ENCODE measurements at regions of chr3 and their contacts with region 1.

Region 1: DNA sequence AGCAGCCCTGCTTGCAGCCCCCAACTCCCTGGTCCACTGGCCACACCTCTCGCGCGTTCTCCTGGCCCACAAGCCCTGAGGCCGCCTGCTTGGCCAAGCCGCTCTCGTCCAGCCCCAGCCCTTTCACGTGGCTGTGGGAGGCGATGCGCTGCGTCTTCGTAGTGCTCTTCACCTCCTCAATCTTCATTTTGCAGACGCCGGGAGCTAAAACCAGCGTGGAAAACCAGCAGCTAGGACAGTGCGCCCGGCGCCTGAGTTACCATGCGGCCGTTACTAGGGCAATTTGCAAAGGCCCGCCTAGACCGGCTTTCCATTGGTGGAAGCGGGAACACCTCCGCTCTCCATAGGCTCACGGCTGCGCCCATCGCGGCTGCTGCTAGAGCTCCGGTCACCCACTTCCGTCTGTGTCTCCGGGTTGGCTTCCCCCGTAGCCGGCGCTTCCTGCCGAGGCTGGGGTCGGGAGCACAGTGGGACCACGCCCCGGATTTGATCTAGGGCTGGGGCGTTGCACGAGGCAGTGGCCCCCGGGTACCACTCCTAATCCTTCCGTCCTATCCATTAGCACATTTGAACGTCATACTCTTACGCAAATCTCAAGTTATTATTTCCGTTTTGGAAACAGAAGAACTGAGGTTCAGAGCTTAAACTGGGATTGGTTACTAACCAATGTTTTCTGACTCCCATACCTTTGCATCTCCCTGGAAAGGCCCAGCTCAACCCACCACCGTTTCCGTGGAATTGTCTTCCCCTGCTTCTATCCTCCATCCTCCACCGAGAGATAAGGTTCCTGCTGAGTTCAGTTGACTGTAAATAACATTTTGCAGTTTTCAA is at the start of gene RUVBL1:
- DNase-seq: peak; percentile 89 to 99
- H3K4me3 ChIP-seq: peak within 1 kb of the TSS; percentile 82 to 87
- H3K27ac ChIP-seq: peak within 1 kb of the TSS; percentile 66 to 75
- H3K4me1 ChIP-seq: peaks cover 0 to 8% of the 10 kb centered on the region in 2 donors
- H3K27me3 ChIP-seq: no peaks in the 10 kb centered on the region
- CTCF ChIP-seq: no peak
- total RNA-seq, gene RUVBL1: 10.3 TPM

Region 2: GRCh38 chr3:128051837-128052594 is 71.7 kb before region 1 on chr3 and contains the start of gene SEC61A1:
- intact Hi-C with region 1: loop called (anchors 1 kb)
- DNase-seq: peak; percentile 81 to 96
- H3K4me3 ChIP-seq: peak within 1 kb of the TSS; percentile 94 to 98
- H3K27ac ChIP-seq: peak within 1 kb of the TSS; percentile 96
- H3K4me1 ChIP-seq: peaks cover 15 to 29% of the 10 kb centered on the region in 2 donors
- H3K27me3 ChIP-seq: no peaks in the 10 kb centered on the region
- CTCF ChIP-seq: peak in 1 of 3 experiments; percentile 4
- total RNA-seq, gene SEC61A1: 193 TPM

Region 3: DNA sequence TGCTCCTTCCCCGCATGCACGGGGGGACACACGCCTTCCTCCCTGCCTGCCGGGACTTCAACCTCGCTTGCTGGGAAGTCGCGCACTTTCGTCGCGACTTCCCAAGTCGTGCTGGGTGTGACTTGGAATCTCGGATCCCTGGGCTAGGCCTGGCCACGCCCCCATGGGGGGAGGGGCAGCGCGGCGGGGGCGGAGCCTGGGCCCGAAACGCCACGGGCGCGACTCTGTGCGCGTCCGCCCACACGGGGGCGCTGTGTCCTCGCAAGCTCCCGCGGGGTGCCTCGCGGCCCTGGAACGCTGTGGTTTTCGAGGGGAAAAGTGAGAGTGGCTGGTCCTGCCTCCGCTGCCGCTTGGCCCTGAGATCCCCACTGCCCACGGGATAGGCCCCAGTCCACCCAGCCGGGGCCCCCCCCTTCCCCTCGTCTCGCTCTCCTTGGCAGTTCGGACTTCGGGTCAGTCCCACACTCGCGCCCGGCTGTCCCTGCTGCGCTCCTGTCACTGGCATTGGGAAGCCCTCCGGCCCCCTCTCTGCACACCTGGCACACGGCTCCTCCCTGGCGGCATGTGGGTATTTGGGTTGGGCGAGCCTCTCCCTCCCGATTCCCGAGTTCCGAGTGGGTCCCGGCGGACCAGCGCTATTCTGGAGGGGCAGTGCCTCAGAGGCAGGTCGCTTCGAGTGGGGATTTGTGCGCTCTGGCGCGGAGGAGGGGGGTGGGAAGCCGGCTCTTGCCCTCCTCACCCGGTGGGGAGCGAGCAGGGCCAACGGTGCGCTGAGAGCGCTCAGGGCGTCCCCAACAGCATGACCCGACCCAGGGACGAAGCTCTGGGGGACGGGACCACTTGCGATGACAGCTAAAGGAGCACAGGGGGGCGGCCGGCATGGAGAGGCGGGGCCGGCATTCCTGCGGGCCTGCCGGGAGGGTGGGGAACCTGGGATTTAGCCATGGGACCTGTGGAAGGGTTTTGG is 48.0 kb before region 1 on chr3:
- intact Hi-C with region 1: loop called (anchors 2 kb)
- DNase-seq: peak in 1 of 2 donors; percentile 91
- H3K4me3 ChIP-seq: peak overlapping the region; percentile 57 to 71
- H3K27ac ChIP-seq: peak overlapping the region; percentile 9 to 53
- H3K4me1 ChIP-seq: peaks cover 0 to 15% of the 10 kb centered on the region in 2 donors
- H3K27me3 ChIP-seq: no peaks in the 10 kb centered on the region
- CTCF ChIP-seq: peak; percentile 91 to 97 (median 96)

Measured in ascending aorta (tissue), 2 donors.